Natural killer cell (primary cell): ENCODE measurements at regions of chr19 and their contacts with region 1.

Region 1: GRCh38 chr19:13846557-13847406 is 30.2 kb upstream of the NANOS3 start:
- DNase-seq: peak; percentile 97 to 99
- ATAC-seq: peak; percentile 48 to 81 (median 63)
- H3K4me3 ChIP-seq: peak overlapping the region; percentile 38
- H3K4me3 Mint-ChIP-seq: peak overlapping the region; percentile 88
- H3K27ac ChIP-seq: peak overlapping the region; percentile 87
- H3K27ac Mint-ChIP-seq: peak overlapping the region; percentile 99 to 100
- H3K4me1 ChIP-seq: peaks cover 76% of the 10 kb centered on the region
- H3K4me1 Mint-ChIP-seq: peaks cover 32 to 61% of the 10 kb centered on the region in 2 donors
- H3K27me3 ChIP-seq: no peaks in the 10 kb centered on the region
- H3K27me3 Mint-ChIP-seq: no peaks in the 10 kb centered on the region
- CTCF ChIP-seq: no peak

Region 2: GRCh38 chr19:13155472-13156359 is 691.1 kb before region 1 on chr19:
- intact Hi-C with region 1: loop called (anchors 5 kb)
- DNase-seq: peak; percentile 77 to 90
- ATAC-seq: peak; percentile 17 to 45 (median 32)
- H3K4me3 ChIP-seq: peak overlapping the region; percentile 100
- H3K4me3 Mint-ChIP-seq: peak overlapping the region; percentile 99
- H3K27ac ChIP-seq: peak overlapping the region; percentile 90
- H3K27ac Mint-ChIP-seq: peak overlapping the region; percentile 99
- H3K4me1 ChIP-seq: peaks cover 59% of the 10 kb centered on the region
- H3K4me1 Mint-ChIP-seq: peaks cover 66 to 80% of the 10 kb centered on the region in 2 donors
- H3K27me3 ChIP-seq: no peaks in the 10 kb centered on the region
- H3K27me3 Mint-ChIP-seq: peaks cover 0 to 3% of the 10 kb centered on the region in 2 donors
- CTCF ChIP-seq: no peak

Region 3: DNA sequence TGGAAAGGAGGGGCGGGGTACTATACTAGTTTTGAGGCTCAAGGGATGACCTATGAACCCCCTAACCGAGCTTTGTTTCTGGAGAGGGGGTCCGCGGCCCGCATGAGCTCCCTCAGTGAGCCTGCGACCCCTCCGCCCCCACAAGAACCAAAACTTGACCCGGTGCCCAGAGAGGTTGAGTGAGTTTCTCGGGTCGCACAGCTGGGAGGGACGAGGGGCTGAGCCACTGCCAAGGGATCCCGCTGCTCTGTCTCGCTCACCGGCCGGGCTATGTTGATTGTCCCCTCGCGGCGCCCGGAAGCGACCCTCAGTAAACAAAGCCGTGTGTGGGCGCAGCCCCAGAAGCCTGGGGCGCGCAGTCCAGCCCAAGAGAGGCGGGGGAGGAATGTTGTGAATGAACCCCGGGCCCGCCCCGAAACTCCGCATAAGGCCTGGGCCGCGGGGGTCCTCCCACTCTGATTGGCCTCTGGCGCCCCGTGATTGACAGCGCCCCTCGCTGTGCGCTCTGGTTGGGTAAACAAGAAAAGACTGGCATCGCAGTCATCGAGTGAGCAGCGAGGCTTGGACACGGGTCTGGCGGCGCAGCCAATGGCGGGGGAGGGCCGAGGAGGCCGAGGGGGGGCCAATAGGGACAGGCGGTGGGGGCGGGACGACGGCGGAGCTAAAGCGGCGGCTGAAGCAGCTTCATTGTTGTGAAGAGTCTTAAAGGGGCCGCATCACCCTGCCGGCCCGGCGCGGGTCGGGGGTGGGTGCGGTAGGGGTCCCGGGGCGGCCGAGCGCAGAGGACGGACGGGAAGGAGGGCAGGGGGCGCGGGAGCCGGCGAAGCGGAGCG is 51.8 kb before region 1 on chr19 and contains the start of gene ZSWIM4:
- intact Hi-C with region 1: loop called (anchors 2 kb)
- DNase-seq: peak; percentile 90 to 92
- ATAC-seq: peak; percentile 88 to 96 (median 91)
- H3K4me3 ChIP-seq: peak within 1 kb of the TSS; percentile 69
- H3K4me3 Mint-ChIP-seq: peak within 1 kb of the TSS; percentile 94
- H3K27ac ChIP-seq: peak within 1 kb of the TSS; percentile 68
- H3K27ac Mint-ChIP-seq: peak within 1 kb of the TSS; percentile 87 to 98
- H3K4me1 ChIP-seq: peaks cover 32% of the 10 kb centered on the region
- H3K4me1 Mint-ChIP-seq: peaks cover 26 to 36% of the 10 kb centered on the region in 2 donors
- H3K27me3 ChIP-seq: no peaks in the 10 kb centered on the region
- H3K27me3 Mint-ChIP-seq: no peaks in the 10 kb centered on the region
- CTCF ChIP-seq: no peak
- total RNA-seq, gene ZSWIM4: 5.8 to 5.9 (median 5.9) TPM

Region 4: GRCh38 chr19:14203177-14203576 is 356.4 kb after region 1 on chr19:
- intact Hi-C with region 1: no loop called
- DNase-seq: peak in 1 of 2 donors; percentile 39
- ATAC-seq: no peak
- H3K4me3 ChIP-seq: no peak overlapping the region
- H3K4me3 Mint-ChIP-seq: peak overlapping the region; percentile 90
- H3K27ac ChIP-seq: no peak overlapping the region
- H3K27ac Mint-ChIP-seq: no peak overlapping the region
- H3K4me1 ChIP-seq: peaks cover 44% of the 10 kb centered on the region
- H3K4me1 Mint-ChIP-seq: peaks cover 37 to 67% of the 10 kb centered on the region in 2 donors
- H3K27me3 ChIP-seq: no peaks in the 10 kb centered on the region
- H3K27me3 Mint-ChIP-seq: no peaks in the 10 kb centered on the region
- CTCF ChIP-seq: no peak